ENCODE measurements at regions of chr2 and their contacts with region 1.

Region 1: DNA sequence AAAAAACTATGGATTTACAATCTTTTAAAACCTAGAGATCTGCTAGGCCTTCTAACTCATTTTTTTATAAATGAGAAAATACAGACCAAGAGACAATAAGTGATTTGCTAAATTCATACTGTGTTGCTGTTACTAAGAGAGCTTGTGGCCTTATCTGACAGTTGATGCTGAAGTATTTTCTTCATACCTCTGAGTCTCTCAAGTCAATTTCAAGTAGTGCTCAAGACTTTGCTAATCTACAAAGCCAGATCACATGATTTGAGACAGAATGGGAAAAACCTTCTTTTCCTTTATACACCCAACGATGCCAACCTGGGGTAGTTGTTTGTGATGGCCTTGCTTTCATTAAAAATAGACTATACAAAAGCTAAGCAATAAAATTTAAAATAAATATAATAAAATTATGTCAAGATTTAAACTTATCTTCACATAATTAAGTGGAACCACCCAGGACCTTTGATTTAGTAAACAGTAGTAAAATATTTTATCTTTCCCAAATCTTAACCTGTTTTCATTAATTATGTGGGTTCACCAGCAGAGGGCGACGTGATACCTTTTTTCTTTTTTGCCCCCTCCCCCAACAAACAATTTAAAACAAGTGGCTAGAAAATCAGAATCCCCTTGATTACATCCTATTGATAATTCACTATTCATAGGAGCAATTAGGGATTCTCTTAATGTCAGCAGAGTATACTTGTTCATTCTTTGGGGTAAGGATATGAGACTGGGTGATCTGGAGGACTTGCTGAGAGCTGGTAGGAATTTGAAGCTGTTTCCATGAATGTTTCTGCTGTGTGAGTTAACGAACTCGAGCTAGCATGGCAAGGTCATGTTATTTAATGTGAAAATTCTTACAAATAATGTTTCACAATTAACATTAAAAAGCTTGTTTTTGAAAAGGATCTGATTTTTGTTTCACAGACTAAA is 49.6 kb upstream of the SLC5A7 start:
- DNase-seq: peak; percentile 12
- H3K4me3 Mint-ChIP-seq: no peak overlapping the region
- H3K27ac Mint-ChIP-seq: no peak overlapping the region
- H3K4me1 Mint-ChIP-seq: no peaks in the 10 kb centered on the region
- H3K27me3 Mint-ChIP-seq: peaks cover 14% of the 10 kb centered on the region

Region 2: DNA sequence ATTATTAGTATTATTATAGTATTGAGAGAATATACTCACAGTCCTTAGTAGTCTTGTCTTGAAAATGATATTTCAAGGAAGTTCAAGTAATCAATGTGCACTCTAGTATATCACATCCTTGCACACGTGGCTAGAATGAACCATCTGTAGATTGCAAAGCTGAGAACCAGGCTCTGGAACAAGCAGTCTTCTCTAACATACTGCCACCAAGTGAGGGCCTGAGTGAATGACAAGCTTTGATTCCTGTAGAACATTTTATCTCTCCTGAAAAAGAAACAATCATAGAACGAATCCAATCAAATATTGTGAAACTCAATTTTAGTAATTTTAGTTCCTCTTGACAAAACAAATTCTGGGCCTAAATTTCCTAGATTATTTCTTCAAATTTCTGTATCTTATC is 247.7 kb after region 1 on chr2:
- CTCF ChIA-PET with region 1: interaction called, 3 read pairs
- intact Hi-C with region 1: loop called (anchors 5 kb)
- DNase-seq: peak; percentile 6
- H3K4me3 Mint-ChIP-seq: no peak overlapping the region
- H3K27ac Mint-ChIP-seq: no peak overlapping the region
- H3K4me1 Mint-ChIP-seq: no peaks in the 10 kb centered on the region
- H3K27me3 Mint-ChIP-seq: peaks cover 3% of the 10 kb centered on the region